WTC11 (cell line): ENCODE measurements at regions of chr10 and their contacts with region 1.

Region 1: DNA sequence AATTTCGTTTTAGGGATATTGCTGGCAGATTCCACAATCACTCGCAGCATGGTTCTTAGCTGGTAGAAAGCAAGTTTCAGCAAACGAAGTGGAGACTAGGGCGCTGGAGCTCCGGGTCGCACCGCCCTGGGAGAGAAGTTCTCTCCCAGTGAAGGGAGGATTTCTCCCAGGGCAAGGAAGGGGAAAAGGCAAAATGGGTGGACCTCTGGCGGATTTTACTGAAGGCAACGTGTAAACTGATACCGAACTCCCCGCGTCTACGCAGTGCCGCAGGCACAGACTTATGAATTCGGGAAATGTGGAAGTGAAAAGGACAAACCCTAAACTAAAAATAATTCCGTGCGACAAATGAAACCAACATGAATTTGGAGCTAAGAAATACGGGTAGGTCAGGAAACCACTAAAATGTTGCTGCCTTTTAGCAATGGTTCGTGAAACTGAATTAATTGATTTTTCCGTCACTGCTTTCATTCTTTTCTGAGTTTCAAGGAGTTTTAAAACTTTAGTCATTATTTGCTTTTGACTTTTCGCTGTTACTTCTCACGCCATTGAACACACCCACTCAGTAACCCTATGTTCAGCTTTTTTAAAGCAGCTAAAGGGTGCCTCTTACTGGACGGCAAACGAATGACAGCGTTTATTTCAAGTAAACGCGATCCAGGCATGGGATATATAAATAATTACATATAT is at the start of gene MYOF:
- DNase-seq: peak; percentile 35
- ATAC-seq: peak; percentile 76
- H3K4me3 Mint-ChIP-seq: peak within 1 kb of the TSS; percentile 86
- H3K27ac Mint-ChIP-seq: 0 out of 2 replicates have a peak within 1 kb of the TSS, but pooled peaks have one; percentile 17
- H3K4me1 Mint-ChIP-seq: peaks cover 18% of the 10 kb centered on the region
- H3K27me3 Mint-ChIP-seq: peaks cover 16% of the 10 kb centered on the region
- CTCF ChIP-seq: no peak; the same call in 1 of the 2 replicates
- total RNA-seq, gene MYOF: 1.4 to 2.2 TPM (median 1.8 TPM) in 3 replicates

Region 2: GRCh38 chr10:93363891-93364648 is 118.2 kb before region 1 on chr10:
- CTCF ChIA-PET with region 1: interaction called, 17 read pairs
- POLR2A ChIA-PET with region 1: no interaction called
- DNase-seq: no peak
- ATAC-seq: 0 out of 2 replicates have a peak, but pooled peaks have one; percentile 24
- H3K4me3 Mint-ChIP-seq: no peak overlapping the region
- H3K27ac Mint-ChIP-seq: no peak overlapping the region
- H3K4me1 Mint-ChIP-seq: peaks cover 12% of the 10 kb centered on the region
- H3K27me3 Mint-ChIP-seq: no peaks in the 10 kb centered on the region
- CTCF ChIP-seq: no peak

Region 3: GRCh38 chr10:93386631-93387369 is 95.5 kb before region 1 on chr10:
- CTCF ChIA-PET with region 1: interaction called, 311 read pairs
- POLR2A ChIA-PET with region 1: interaction called, 3 read pairs
- DNase-seq: no peak
- ATAC-seq: peak; percentile 32; the same call in 1 of the 2 replicates
- H3K4me3 Mint-ChIP-seq: no peak overlapping the region
- H3K27ac Mint-ChIP-seq: no peak overlapping the region
- H3K4me1 Mint-ChIP-seq: peaks cover 21% of the 10 kb centered on the region
- H3K27me3 Mint-ChIP-seq: no peaks in the 10 kb centered on the region; the same call in 1 of the 2 replicates
- CTCF ChIP-seq: no peak

Region 4: GRCh38 chr10:93437088-93437945 is 45.0 kb before region 1 on chr10:
- CTCF ChIA-PET with region 1: interaction called, 19 read pairs
- POLR2A ChIA-PET with region 1: interaction called, 5 read pairs
- DNase-seq: peak; percentile 43
- ATAC-seq: peak; percentile 48
- H3K4me3 Mint-ChIP-seq: peak overlapping the region; percentile 68
- H3K27ac Mint-ChIP-seq: peak overlapping the region; percentile 98
- H3K4me1 Mint-ChIP-seq: peaks cover 78% of the 10 kb centered on the region
- H3K27me3 Mint-ChIP-seq: no peaks in the 10 kb centered on the region; the same call in 1 of the 2 replicates
- CTCF ChIP-seq: no peak

Region 5: GRCh38 chr10:93471110-93471651 is 11.1 kb before region 1 on chr10:
- CTCF ChIA-PET with region 1: interaction called, 19 read pairs
- POLR2A ChIA-PET with region 1: interaction called, 3 read pairs
- DNase-seq: no peak
- ATAC-seq: peak; percentile 34; the same call in 1 of the 2 replicates
- H3K4me3 Mint-ChIP-seq: no peak overlapping the region
- H3K27ac Mint-ChIP-seq: no peak overlapping the region
- H3K4me1 Mint-ChIP-seq: peaks cover 12% of the 10 kb centered on the region
- H3K27me3 Mint-ChIP-seq: no peaks in the 10 kb centered on the region
- CTCF ChIP-seq: no peak

Region 6: DNA sequence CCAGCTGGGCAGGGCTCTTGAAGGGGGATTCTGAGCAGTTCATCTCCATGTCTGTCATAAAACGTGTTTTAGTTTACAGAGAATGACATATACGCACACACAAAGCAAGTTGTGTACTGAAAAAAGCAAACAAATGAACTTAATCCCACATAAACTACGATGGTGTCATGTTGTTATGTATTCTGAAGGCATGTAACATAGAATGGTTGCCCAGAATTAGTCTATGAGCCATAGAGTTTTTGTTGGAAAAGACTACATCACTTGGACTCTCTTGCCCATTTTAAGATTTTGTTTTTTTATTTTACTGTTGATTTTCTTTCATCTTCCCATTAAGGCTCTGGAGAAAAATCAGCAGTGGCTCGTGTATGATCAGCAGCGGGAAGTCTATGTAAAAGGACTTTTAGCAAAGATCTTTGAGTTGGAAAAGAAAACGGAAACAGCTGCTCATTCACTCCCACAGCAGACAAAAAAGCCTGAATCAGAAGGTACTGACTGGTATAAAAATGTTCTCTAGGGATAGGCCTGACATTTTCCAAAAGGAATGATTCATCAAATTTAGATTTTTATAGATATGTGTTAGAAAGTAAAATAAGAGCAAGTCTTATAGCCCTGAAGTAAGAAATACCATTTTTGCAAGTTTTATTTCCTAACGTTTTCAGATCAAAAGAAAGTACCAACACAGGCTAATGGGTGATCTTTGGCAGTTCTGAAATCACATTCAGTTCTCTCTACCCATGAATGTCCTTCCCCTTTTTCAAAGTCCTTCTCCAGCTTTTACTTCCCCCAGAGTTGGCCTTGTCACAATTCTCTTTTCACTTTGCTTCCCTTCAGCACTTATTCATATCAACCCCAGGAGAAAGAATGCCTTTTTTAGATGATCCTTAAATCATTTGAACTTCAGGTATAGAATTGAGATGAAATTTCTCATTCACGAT is 33.0 kb after region 1 on chr10:
- CTCF ChIA-PET with region 1: interaction called, 30 read pairs
- POLR2A ChIA-PET with region 1: no interaction called
- DNase-seq: no peak
- ATAC-seq: no peak
- H3K4me3 Mint-ChIP-seq: no peak overlapping the region
- H3K27ac Mint-ChIP-seq: no peak overlapping the region
- H3K4me1 Mint-ChIP-seq: peaks cover 5% of the 10 kb centered on the region
- H3K27me3 Mint-ChIP-seq: no peaks in the 10 kb centered on the region
- CTCF ChIP-seq: no peak